ENCODE measurements at regions of chr14 and their contacts with region 1.

Region 1: GRCh38 chr14:77707724-77708408 is at the starts of genes ALKBH1 and SLIRP:
- DNase-seq: peak; percentile 73 to 93 (median 88)
- ATAC-seq: peak; percentile 97
- H3K4me3 ChIP-seq: peak within 1 kb of the TSS; percentile 91 to 92
- H3K4me3 Mint-ChIP-seq: peak within 1 kb of the TSS; percentile 96
- H3K27ac ChIP-seq: peak within 1 kb of the TSS; percentile 72 to 75
- H3K27ac Mint-ChIP-seq: peak within 1 kb of the TSS; percentile 91
- H3K4me1 ChIP-seq: peaks cover 29% of the 10 kb centered on the region
- H3K4me1 Mint-ChIP-seq: peaks cover 46% of the 10 kb centered on the region
- H3K27me3 ChIP-seq: no peaks in the 10 kb centered on the region
- H3K27me3 Mint-ChIP-seq: no peaks in the 10 kb centered on the region
- CTCF ChIP-seq: no peak
- total RNA-seq, gene ALKBH1: 10.7 to 11.9 TPM
- total RNA-seq, gene SLIRP: 58.2 TPM

Region 2: GRCh38 chr14:77320238-77320935 is 387.5 kb before region 1 on chr14 and contains the start of gene POMT2:
- CTCF ChIA-PET with region 1: no interaction called
- POLR2A ChIA-PET with region 1: no interaction called
- intact Hi-C with region 1: loop called (anchors 1 to 2 kb)
- DNase-seq: peak; percentile 85 to 95 (median 91)
- ATAC-seq: peak; percentile 49
- H3K4me3 ChIP-seq: peak within 1 kb of the TSS; percentile 89 to 100
- H3K4me3 Mint-ChIP-seq: peak within 1 kb of the TSS; percentile 99
- H3K27ac ChIP-seq: peak within 1 kb of the TSS; percentile 90 to 97
- H3K27ac Mint-ChIP-seq: peak within 1 kb of the TSS; percentile 98
- H3K4me1 ChIP-seq: peaks cover 12% of the 10 kb centered on the region
- H3K4me1 Mint-ChIP-seq: peaks cover 20% of the 10 kb centered on the region
- H3K27me3 ChIP-seq: no peaks in the 10 kb centered on the region
- H3K27me3 Mint-ChIP-seq: no peaks in the 10 kb centered on the region
- CTCF ChIP-seq: no peak
- total RNA-seq, gene POMT2: 8.4 to 9.6 TPM

Region 3: DNA sequence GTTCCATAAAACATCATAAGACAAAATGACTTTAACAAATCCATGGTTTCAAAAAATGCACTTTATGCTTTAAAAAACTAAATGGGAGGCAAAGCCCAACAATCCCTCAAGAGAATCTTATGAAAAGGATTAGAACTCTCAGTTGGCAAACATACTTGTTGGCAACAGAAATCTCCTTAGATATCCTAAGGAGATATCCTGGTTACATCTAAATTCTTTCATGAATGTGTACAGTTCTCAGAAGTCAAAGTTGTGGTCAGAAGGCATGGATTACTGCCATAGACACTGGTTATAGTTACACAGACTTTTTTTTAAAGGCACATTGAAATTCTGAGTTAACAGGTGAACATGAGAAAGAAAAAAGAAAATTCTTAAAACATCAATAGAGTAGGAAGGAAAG is 191.7 kb before region 1 on chr14:
- CTCF ChIA-PET with region 1: no interaction called
- POLR2A ChIA-PET with region 1: no interaction called
- intact Hi-C with region 1: no loop called
- DNase-seq: no peak
- ATAC-seq: no peak
- H3K4me3 ChIP-seq: no peak overlapping the region
- H3K4me3 Mint-ChIP-seq: no peak overlapping the region
- H3K27ac ChIP-seq: no peak overlapping the region
- H3K27ac Mint-ChIP-seq: no peak overlapping the region
- H3K4me1 ChIP-seq: no peaks in the 10 kb centered on the region
- H3K4me1 Mint-ChIP-seq: no peaks in the 10 kb centered on the region
- H3K27me3 ChIP-seq: no peaks in the 10 kb centered on the region
- H3K27me3 Mint-ChIP-seq: no peaks in the 10 kb centered on the region
- CTCF ChIP-seq: no peak

Region 4: GRCh38 chr14:77554207-77554606 is 153.7 kb before region 1 on chr14:
- CTCF ChIA-PET with region 1: no interaction called
- POLR2A ChIA-PET with region 1: no interaction called
- intact Hi-C with region 1: loop called in 1 of 2 experiments (anchors 5 kb)
- DNase-seq: peak in 1 of 9 experiments; percentile 14
- ATAC-seq: no peak
- H3K4me3 ChIP-seq: no peak overlapping the region
- H3K4me3 Mint-ChIP-seq: no peak overlapping the region
- H3K27ac ChIP-seq: peak overlapping the region in 1 of 2 experiments; percentile 2
- H3K27ac Mint-ChIP-seq: peak overlapping the region; percentile 43
- H3K4me1 ChIP-seq: no peaks in the 10 kb centered on the region
- H3K4me1 Mint-ChIP-seq: peaks cover 2% of the 10 kb centered on the region
- H3K27me3 ChIP-seq: no peaks in the 10 kb centered on the region
- H3K27me3 Mint-ChIP-seq: no peaks in the 10 kb centered on the region
- CTCF ChIP-seq: no peak

Region 5: DNA sequence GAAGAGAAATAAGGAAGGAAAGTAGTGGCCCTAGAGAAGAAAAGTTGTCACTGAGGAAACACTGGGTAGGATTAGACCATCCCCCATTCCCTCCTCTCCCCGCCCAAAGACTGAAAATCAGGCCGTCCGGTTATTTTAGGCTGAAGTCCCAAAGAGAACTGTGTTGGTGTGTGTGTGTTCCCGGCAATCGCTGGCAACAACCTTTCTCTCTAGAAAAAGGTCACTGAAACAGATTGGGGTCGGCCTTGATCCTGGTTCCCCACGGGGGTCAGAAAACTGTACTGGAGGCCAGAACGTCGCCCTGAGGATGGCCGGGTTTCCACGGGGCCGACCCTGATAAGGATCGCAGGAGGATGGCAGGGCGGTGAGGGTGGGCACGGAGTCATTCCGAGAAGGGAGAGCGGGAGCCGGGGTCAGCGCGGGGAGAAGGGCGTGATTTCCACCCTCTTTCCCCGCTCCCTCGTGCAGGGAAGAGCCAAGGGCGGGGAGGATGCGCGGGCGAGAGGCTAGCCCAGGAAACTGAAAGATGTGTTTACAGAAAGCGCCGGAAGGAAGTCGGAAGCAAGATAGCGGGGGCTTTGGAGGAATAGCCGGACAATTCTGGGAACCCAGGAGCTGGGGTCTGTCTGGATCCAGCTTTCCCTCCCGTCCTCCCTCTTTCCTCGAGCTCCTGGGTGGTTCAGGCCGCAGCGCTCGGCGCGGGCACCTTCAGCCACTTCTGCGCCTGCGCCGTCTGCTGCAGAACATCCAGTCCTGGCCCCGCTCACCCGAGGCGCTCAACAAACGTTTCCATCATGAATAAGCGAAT is 66.1 kb before region 1 on chr14:
- CTCF ChIA-PET with region 1: no interaction called
- POLR2A ChIA-PET with region 1: no interaction called
- intact Hi-C with region 1: loop called in 1 of 2 experiments (anchors 2 kb)
- DNase-seq: peak; percentile 27 to 82 (median 63)
- ATAC-seq: peak; percentile 83
- H3K4me3 ChIP-seq: peak overlapping the region; percentile 65 to 84
- H3K4me3 Mint-ChIP-seq: peak overlapping the region; percentile 94
- H3K27ac ChIP-seq: peak overlapping the region; percentile 75 to 85
- H3K27ac Mint-ChIP-seq: peak overlapping the region; percentile 97
- H3K4me1 ChIP-seq: peaks cover 11% of the 10 kb centered on the region
- H3K4me1 Mint-ChIP-seq: peaks cover 15% of the 10 kb centered on the region
- H3K27me3 ChIP-seq: no peaks in the 10 kb centered on the region
- H3K27me3 Mint-ChIP-seq: no peaks in the 10 kb centered on the region
- CTCF ChIP-seq: no peak

Region 6: DNA sequence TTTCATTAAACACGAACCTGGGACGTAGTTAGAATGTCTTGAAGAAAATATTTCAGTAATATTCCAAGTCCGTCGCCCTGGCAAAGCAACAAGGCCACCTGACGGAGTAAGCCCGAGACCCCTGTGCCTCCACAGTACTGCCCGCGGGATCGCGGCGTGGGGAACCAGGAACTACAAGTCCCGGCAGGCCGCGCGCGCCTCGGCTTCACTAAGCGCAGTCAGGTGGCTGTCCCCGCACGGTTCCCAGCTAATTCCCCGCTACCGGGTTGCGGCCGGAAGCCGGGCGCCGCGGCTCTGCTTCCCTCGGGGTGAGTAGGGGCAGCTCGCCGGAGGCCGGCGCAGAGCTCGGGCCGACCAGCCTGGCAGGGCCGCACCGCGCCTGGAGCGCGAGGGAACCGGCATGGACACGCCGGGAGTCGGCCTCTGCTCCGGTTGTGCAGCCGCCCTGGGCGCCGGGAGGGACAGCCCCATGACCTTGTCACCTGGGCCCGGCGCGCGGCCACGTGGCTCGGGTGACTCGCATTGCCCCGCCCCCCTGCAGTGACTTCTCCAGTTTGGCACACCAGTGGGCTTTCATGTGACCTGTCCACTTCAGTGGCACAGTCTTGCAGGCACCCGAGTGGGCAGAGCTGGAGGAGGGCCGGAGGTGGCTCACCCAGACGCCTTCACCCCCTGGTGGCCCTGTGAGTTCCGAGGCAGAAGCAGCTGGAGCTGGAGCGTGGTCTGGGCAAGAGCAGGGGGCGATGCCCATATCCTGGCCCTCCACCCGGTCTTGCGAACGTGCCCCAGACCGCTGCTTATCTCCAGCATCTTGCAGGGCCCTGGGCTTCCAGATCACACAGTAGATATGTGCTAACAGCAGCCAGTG is 92.2 kb after region 1 on chr14 and contains the start of gene ADCK1:
- CTCF ChIA-PET with region 1: no interaction called
- POLR2A ChIA-PET with region 1: no interaction called
- intact Hi-C with region 1: loop called (anchors 1 to 5 kb)
- DNase-seq: peak; percentile 54 to 89 (median 83)
- ATAC-seq: peak; percentile 91
- H3K4me3 ChIP-seq: peak within 1 kb of the TSS; percentile 68 to 96
- H3K4me3 Mint-ChIP-seq: peak within 1 kb of the TSS; percentile 83
- H3K27ac ChIP-seq: peak within 1 kb of the TSS; percentile 73 to 78
- H3K27ac Mint-ChIP-seq: peak within 1 kb of the TSS; percentile 76
- H3K4me1 ChIP-seq: peaks cover 3% of the 10 kb centered on the region
- H3K4me1 Mint-ChIP-seq: peaks cover 10% of the 10 kb centered on the region
- H3K27me3 ChIP-seq: no peaks in the 10 kb centered on the region
- H3K27me3 Mint-ChIP-seq: peaks cover 2% of the 10 kb centered on the region
- CTCF ChIP-seq: no peak
- total RNA-seq, gene ADCK1: 3.6 to 4.7 TPM